ENCODE measurements at regions of chr7 and their contacts with region 1.

Region 1: GRCh38 chr7:102279537-102280400 is 6.9 kb upstream of the SH2B2 start:
- DNase-seq: no peak
- ATAC-seq: peak; percentile 84

Region 2: DNA sequence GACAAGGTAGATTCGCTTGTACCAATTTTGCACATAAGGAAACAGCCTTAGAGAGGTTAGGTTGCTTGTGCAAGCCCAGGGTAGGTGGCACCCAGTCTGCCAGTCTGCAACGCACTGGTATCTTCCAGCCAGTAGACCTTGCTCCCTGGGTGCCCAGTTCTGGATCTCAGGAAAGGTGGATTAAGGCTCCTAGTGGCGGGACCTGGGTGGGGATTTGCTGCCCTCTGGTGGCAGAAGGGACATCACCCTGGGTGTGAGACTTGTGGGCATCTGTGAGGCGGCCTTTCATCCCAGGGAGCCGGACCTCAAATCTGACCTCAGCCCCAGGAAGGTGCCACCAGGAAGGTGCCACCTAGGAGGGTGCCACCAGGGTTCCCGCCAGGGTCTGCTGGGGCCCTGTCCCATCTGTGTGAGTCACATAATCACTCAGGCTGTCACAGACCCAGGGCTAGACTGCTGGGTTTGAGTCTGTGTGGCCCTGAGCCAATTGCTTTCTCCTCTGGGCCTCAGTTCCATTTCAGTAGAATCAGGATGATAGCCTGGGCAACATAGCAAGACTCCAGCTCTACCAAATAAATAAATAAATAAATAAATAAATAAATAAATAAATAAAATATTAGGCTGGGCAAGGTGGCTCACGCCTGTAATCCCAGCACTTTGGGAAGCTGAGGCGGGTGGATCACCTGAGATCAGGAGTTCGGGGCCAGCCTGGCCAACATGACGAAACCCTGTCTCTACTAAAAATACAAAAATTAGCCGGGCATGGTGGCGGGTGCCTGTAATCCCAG is 111.1 kb after region 1 on chr7:
- intact Hi-C with region 1: loop called (anchors 5 kb)
- DNase-seq: peak; percentile 92
- ATAC-seq: peak; percentile 88

Measured in sciatic nerve (tissue), 2 donors.